ENCODE measurements at regions of chr15 and their contacts with region 1.

Region 1: DNA sequence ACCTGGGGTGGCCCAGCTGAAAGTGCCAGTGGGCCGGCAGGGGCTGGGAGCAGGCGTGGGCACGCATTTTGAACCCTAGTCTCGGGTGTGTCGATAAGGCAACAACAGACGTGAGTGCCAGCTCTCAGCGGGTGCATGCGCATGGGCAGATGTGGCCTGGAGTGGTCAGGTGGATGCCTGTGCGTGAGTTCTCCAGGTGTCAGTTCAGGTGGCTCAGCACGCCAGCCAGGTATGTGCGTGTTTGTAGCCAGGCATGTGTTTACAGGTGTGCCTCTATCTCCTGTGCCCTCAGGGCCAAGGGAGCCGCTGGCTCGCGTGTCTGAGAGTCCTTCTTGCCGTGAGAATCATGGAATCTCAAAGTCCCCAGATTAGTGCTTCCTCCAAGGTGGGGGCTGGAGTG is 14.8 kb downstream of the CYP1A2 start:
- DNase-seq: no peak
- ATAC-seq: no peak
- H3K4me3 ChIP-seq: no peak overlapping the region
- H3K27ac ChIP-seq: no peak overlapping the region
- H3K4me1 ChIP-seq: no peaks in the 10 kb centered on the region
- H3K27me3 ChIP-seq: no peaks in the 10 kb centered on the region
- CTCF ChIP-seq: no peak
- POLR2A ChIP-seq: no peak
- RAD21 ChIP-seq: no peak

Region 2: DNA sequence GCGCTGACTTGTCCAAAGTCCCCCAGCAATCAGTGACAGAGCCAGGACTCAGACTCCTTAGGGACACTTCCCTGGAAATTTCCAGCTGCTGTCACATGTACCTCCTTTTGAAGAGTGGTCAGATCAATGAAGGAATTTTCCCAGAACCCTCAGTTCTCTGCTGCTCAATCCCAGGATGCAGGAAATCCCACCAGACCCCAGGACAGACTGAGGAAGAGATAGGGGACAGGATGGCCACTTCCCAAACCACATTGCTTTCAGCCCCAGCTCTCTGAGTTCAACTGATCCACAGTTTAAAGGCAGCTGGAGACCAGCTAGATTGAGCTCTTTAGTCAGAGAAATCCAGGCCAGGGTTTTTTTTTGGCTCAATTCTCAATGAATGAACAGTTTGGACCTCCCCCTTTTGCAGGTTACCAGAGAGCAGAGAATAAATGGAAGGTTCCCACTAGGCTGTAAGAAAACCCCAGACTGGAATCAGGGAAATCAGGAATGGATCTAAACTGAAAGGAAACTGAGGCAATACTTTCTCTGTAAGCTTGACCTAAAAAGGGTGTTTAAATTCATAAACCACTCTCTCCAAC is 39.6 kb before region 1 on chr15:
- CTCF ChIA-PET with region 1: interaction called, 3 read pairs
- POLR2A ChIA-PET with region 1: interaction called, 10 read pairs
- RAD21 ChIA-PET with region 1: interaction called in 1 of 2 experiments, 4 read pairs
- intact Hi-C with region 1: no loop called
- DNase-seq: peak; percentile 77
- ATAC-seq: peak; percentile 55
- H3K4me3 ChIP-seq: no peak overlapping the region
- H3K27ac ChIP-seq: peak overlapping the region; percentile 3; the same call in 1 of the 2 replicates
- H3K4me1 ChIP-seq: peaks cover 22 to 39% of the 10 kb centered on the region in 2 experiments
- H3K27me3 ChIP-seq: no peaks in the 10 kb centered on the region
- CTCF ChIP-seq: no peak
- POLR2A ChIP-seq: no peak
- RAD21 ChIP-seq: no peak

Region 3: GRCh38 chr15:74857082-74857655 is 93.8 kb after region 1 on chr15:
- CTCF ChIA-PET with region 1: no interaction called
- POLR2A ChIA-PET with region 1: no interaction called
- RAD21 ChIA-PET with region 1: no interaction called
- intact Hi-C with region 1: no loop called
- DNase-seq: no peak
- ATAC-seq: peak; percentile 68
- H3K4me3 ChIP-seq: no peak overlapping the region; a peak in 1 of 4 replicates
- H3K27ac ChIP-seq: peak overlapping the region; percentile 28; the same call in 1 of the 2 replicates
- H3K4me1 ChIP-seq: peaks cover 0 to 32% of the 10 kb centered on the region in 2 experiments; a peak in 3 of 4 replicates
- H3K27me3 ChIP-seq: no peaks in the 10 kb centered on the region
- CTCF ChIP-seq: no peak
- POLR2A ChIP-seq: no peak
- RAD21 ChIP-seq: no peak

Measured in HCT116 (cell line).